ENCODE measurements at regions of chr17 and their contacts with region 1.

Region 1: GRCh38 chr17:69900829-69901228 is 174.2 kb upstream of the KCNJ16 start:
- DNase-seq: no peak
- ATAC-seq: no peak

Region 2: DNA sequence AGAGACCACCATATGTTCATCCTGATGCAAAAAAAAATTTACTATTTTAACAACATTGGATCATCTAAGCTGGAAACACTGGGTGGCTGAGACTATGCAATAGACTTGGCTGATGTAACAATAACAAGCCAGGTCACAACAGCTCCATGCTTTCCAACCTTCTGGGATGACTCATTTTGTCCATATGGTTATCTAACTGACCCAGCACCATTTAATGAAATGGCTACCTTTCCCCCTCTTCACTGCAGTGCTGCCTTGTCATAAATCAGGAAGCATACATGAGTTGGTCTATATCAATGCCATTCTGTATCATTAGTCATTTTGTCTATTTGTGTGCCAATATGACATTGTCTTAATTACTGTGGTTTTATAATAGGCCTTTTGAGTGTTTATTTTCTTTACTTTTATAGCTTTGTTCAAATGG is 43.4 kb before region 1 on chr17:
- intact Hi-C with region 1: no loop called
- DNase-seq: no peak
- ATAC-seq: no peak

Region 3: GRCh38 chr17:69870091-69870530 is 30.7 kb before region 1 on chr17:
- intact Hi-C with region 1: no loop called
- DNase-seq: no peak
- ATAC-seq: no peak

Region 4: GRCh38 chr17:69949973-69950695 is 49.3 kb after region 1 on chr17:
- intact Hi-C with region 1: loop called (anchors 2 kb)
- DNase-seq: no peak
- ATAC-seq: no peak

Measured in sciatic nerve (tissue), 2 donors.